HepG2 (cell line): ENCODE measurements at regions of chr15 and their contacts with region 1.

Region 1: GRCh38 chr15:75367913-75368688 is at the start of gene MAN2C1:
- DNase-seq: peak; percentile 95
- ATAC-seq: peak; percentile 91
- H3K4me3 ChIP-seq: peak within 1 kb of the TSS; percentile 80 to 92 (median 91)
- H3K27ac ChIP-seq: peak within 1 kb of the TSS; percentile 98
- H3K4me1 ChIP-seq: peaks cover 39% of the 10 kb centered on the region
- H3K27me3 ChIP-seq: no peaks in the 10 kb centered on the region
- CTCF ChIP-seq: peak; percentile 98
- EP300 ChIP-seq: peak; percentile 50 to 68; a peak in 2 of 4 replicates
- POLR2A ChIP-seq: peak; percentile 85 to 98
- RAD21 ChIP-seq: peak; percentile 59
- total RNA-seq, gene MAN2C1: 19.5 and 71.0 TPM in 2 replicates

Region 2: DNA sequence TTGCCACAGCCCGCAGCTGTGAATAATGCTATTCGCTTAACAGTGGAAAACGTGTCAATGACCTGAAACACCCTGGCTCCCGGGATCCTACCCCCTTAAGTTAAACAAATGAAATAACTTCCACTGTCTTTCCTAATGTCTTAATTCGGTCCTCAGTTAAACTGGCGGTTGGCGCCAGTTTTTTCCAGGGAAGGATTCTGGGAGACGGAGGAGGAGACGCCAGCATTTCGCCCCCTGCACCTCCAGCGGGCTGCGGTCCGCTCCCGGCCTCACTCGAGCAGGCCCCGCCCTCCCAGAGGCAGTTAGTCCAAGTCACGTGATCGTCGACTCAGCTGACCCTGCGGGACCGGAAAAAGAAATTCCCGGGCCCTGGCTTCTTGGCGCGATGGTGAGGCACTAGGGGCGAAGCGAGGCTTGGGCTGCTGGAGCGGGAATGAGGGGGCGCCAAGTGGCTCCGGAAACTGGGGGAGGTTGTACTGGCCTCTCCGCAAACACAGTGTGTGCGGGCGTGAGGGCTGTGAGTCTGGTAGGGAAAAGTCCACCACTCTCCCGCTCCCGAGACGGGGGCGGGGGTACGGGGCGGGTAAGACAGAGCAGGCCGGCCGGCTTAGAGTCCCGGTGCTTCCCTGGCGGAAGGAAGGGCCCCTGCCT is 32.3 kb before region 1 on chr15 and contains the start of gene COMMD4:
- CTCF ChIA-PET with region 1: no interaction called
- POLR2A ChIA-PET with region 1: interaction called, 10 read pairs
- in situ Hi-C with region 1: no loop called
- intact Hi-C with region 1: no loop called
- DNase-seq: peak; percentile 91
- ATAC-seq: peak; percentile 85
- H3K4me3 ChIP-seq: peak within 1 kb of the TSS; percentile 73 to 83 (median 81)
- H3K27ac ChIP-seq: peak within 1 kb of the TSS; percentile 78
- H3K4me1 ChIP-seq: peaks cover 22% of the 10 kb centered on the region
- H3K27me3 ChIP-seq: no peaks in the 10 kb centered on the region
- CTCF ChIP-seq: peak; percentile 29; the same call in 1 of the 2 replicates
- EP300 ChIP-seq: peak; percentile 10 to 53; a peak in 2 of 4 replicates
- POLR2A ChIP-seq: peak; percentile 40 to 61; a peak in 2 of 4 replicates
- RAD21 ChIP-seq: 0 out of 2 replicates have a peak, but pooled peaks have one; percentile 8
- total RNA-seq, gene COMMD4: 89.9 and 106 TPM in 2 replicates

Region 3: DNA sequence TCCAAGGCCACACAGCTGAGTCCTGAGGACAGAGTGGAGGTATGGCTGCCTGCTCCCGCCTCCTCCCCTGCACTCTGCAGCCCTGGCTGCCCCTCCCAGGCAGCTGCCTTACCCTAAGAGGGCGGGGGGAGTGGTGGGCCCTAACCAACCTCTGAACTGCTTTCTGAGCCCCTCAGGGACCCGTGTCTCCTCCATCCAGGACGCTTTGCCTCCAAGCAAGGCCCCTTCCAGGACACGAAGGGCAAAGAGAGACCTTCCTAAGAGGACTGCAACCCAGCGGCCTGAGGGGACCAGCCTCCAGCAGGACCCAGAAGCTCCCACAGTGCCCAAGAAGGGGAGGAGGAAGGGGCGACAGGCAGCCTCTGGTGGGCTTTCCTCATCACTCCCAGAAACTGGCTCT is 13.6 kb before region 1 on chr15:
- CTCF ChIA-PET with region 1: no interaction called
- POLR2A ChIA-PET with region 1: interaction called, 40 read pairs
- in situ Hi-C with region 1: no loop called
- intact Hi-C with region 1: no loop called
- DNase-seq: no peak
- ATAC-seq: peak; percentile 16
- H3K4me3 ChIP-seq: no peak overlapping the region
- H3K27ac ChIP-seq: no peak overlapping the region
- H3K4me1 ChIP-seq: peaks cover 10% of the 10 kb centered on the region
- H3K27me3 ChIP-seq: no peaks in the 10 kb centered on the region
- CTCF ChIP-seq: no peak
- EP300 ChIP-seq: no peak
- POLR2A ChIP-seq: no peak
- RAD21 ChIP-seq: no peak

Region 4: DNA sequence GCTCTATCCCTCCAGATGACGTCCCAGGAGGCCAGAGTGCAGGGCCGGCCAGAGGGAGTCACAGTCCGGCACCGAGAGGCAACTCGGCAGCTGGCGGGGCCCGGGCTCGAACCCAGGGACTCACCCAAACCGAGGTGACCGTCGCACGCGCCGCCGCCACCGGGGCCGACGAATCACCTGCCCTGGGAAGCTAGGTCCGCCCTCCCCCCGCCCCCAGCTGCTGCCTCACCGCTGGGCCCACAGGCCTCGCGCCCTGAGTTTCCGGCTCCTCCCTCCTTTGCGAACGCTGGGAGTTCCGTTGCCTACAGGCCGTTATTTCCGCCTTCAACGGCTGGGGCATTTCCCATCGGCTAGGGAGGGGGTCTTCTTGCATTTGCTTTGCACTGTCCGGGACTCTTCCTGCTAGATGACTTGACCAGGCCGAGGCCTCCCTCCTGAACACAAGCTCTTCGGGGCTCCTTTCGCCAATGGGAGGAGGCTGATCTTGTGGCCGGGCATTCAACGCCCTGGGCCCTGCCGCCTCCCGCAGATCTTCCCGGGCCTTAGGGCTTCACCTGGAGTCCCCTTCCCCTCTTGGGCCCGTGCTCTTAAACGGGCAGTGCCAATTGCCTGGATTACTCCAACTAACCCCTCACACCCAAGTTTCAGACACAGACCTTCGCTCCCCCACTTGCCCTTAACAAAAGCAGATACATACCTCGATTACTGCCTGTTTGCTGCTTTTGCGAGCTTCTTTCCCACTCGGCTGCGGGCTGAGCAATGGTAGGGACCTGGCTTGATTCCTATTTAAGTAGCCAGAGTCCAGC is 257.6 kb after region 1 on chr15 and contains the start of gene SNUPN:
- CTCF ChIA-PET with region 1: no interaction called
- POLR2A ChIA-PET with region 1: interaction called, 16 read pairs
- in situ Hi-C with region 1: no loop called
- intact Hi-C with region 1: no loop called
- DNase-seq: peak; percentile 91
- ATAC-seq: peak; percentile 91
- H3K4me3 ChIP-seq: peak within 1 kb of the TSS; percentile 89 to 100 (median 100)
- H3K27ac ChIP-seq: peak within 1 kb of the TSS; percentile 99
- H3K4me1 ChIP-seq: peaks cover 20% of the 10 kb centered on the region
- H3K27me3 ChIP-seq: no peaks in the 10 kb centered on the region; a peak in 1 of 5 replicates
- CTCF ChIP-seq: no peak
- EP300 ChIP-seq: peak in 1 of 2 experiments; percentile 52; a peak in 1 of 4 replicates
- POLR2A ChIP-seq: peak; percentile 45 to 76; a peak in 3 of 4 replicates
- RAD21 ChIP-seq: peak; percentile 9; the same call in 1 of the 2 replicates
- total RNA-seq, gene SNUPN: 16.4 and 18.3 TPM in 2 replicates

Region 5: GRCh38 chr15:75647370-75648155 is 279.5 kb after region 1 on chr15 and contains the start of gene SNX33:
- CTCF ChIA-PET with region 1: no interaction called
- POLR2A ChIA-PET with region 1: interaction called, 16 read pairs
- in situ Hi-C with region 1: loop called (anchors 10 kb)
- intact Hi-C with region 1: no loop called
- DNase-seq: peak; percentile 78
- ATAC-seq: peak; percentile 74
- H3K4me3 ChIP-seq: peak within 1 kb of the TSS; percentile 83 to 96 (median 93)
- H3K27ac ChIP-seq: peak within 1 kb of the TSS; percentile 98
- H3K4me1 ChIP-seq: peaks cover 50% of the 10 kb centered on the region
- H3K27me3 ChIP-seq: peaks cover 0 to 2% of the 10 kb centered on the region in 2 experiments; a peak in 1 of 5 replicates
- CTCF ChIP-seq: peak; percentile 70
- EP300 ChIP-seq: no peak
- POLR2A ChIP-seq: no peak; a peak in 1 of 4 replicates
- RAD21 ChIP-seq: no peak
- total RNA-seq, gene SNX33: 10.8 and 11.0 TPM in 2 replicates